T-cell (primary cell): ENCODE measurements at regions of chr17 and their contacts with region 1.

Region 1: GRCh38 chr17:62995377-62995885 is 29.4 kb downstream of the TANC2 start:
- DNase-seq: peak in 6 of 35 experiments; percentile 2 to 30 (median 11)
- ATAC-seq: no peak
- H3K4me3 ChIP-seq: no peak overlapping the region
- H3K4me3 Mint-ChIP-seq: no peak overlapping the region
- H3K27ac ChIP-seq: no peak overlapping the region
- H3K27ac Mint-ChIP-seq: no peak overlapping the region
- H3K4me1 ChIP-seq: peaks cover 0 to 4% of the 10 kb centered on the region in 2 experiments
- H3K4me1 Mint-ChIP-seq: peaks cover 13 to 21% (median 18%) of the 10 kb centered on the region in 3 donors
- H3K27me3 ChIP-seq: no peaks in the 10 kb centered on the region
- H3K27me3 Mint-ChIP-seq: no peaks in the 10 kb centered on the region

Region 2: DNA sequence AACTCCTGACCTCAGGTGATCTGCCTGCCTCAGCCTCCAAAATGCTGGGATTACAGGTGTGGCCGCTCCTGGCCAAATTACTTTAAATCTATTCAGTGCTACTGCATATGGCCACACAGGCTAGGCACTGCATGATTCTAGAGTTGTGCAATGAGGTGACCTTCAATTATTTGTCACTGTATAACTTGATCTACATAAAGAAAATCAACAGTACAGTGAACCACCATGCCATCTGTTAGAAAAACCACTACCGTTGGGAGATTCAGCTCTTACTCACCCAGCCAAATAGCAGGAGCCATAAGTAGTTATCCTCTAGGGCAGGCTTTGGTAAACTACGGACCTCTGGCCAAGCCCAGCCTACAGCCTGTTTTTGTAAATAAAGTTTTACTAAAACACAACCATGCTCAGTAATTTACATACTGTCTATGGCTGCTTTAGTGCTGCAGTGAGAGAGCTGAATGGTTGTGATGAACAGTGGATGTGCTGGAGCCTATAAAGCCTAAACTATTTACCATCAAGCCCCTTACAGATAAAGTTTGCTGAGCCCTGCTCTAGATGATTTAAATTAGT is 70.1 kb before region 1 on chr17:
- CTCF ChIA-PET with region 1: interaction called in 1 of 2 experiments, 16 read pairs
- POLR2A ChIA-PET with region 1: no interaction called
- DNase-seq: no peak
- ATAC-seq: no peak
- H3K4me3 ChIP-seq: no peak overlapping the region
- H3K4me3 Mint-ChIP-seq: no peak overlapping the region
- H3K27ac ChIP-seq: no peak overlapping the region
- H3K27ac Mint-ChIP-seq: no peak overlapping the region
- H3K4me1 ChIP-seq: no peaks in the 10 kb centered on the region
- H3K4me1 Mint-ChIP-seq: no peaks in the 10 kb centered on the region
- H3K27me3 ChIP-seq: peaks cover 0 to 3% of the 10 kb centered on the region in 2 experiments
- H3K27me3 Mint-ChIP-seq: peaks cover 8 to 10% of the 10 kb centered on the region in 2 donors

Region 3: GRCh38 chr17:63406689-63407330 is 411.4 kb after region 1 on chr17:
- CTCF ChIA-PET with region 1: interaction called, 3 to 11 read pairs
- POLR2A ChIA-PET with region 1: no interaction called
- DNase-seq: peak in 32 of 35 experiments; percentile 38 to 88 (median 57)
- ATAC-seq: peak; percentile 72 to 91 (median 77)
- H3K4me3 ChIP-seq: no peak overlapping the region
- H3K4me3 Mint-ChIP-seq: no peak overlapping the region
- H3K27ac ChIP-seq: peak overlapping the region; percentile 15
- H3K27ac Mint-ChIP-seq: peak overlapping the region in 1 of 2 donors; percentile 4
- H3K4me1 ChIP-seq: no peaks in the 10 kb centered on the region
- H3K4me1 Mint-ChIP-seq: peaks cover 0 to 5% (median 4%) of the 10 kb centered on the region in 3 donors
- H3K27me3 ChIP-seq: no peaks in the 10 kb centered on the region
- H3K27me3 Mint-ChIP-seq: no peaks in the 10 kb centered on the region